CD4-positive, alpha-beta memory T cell (primary cell): ENCODE measurements at regions of chr14 and their contacts with region 1.

Region 1: DNA sequence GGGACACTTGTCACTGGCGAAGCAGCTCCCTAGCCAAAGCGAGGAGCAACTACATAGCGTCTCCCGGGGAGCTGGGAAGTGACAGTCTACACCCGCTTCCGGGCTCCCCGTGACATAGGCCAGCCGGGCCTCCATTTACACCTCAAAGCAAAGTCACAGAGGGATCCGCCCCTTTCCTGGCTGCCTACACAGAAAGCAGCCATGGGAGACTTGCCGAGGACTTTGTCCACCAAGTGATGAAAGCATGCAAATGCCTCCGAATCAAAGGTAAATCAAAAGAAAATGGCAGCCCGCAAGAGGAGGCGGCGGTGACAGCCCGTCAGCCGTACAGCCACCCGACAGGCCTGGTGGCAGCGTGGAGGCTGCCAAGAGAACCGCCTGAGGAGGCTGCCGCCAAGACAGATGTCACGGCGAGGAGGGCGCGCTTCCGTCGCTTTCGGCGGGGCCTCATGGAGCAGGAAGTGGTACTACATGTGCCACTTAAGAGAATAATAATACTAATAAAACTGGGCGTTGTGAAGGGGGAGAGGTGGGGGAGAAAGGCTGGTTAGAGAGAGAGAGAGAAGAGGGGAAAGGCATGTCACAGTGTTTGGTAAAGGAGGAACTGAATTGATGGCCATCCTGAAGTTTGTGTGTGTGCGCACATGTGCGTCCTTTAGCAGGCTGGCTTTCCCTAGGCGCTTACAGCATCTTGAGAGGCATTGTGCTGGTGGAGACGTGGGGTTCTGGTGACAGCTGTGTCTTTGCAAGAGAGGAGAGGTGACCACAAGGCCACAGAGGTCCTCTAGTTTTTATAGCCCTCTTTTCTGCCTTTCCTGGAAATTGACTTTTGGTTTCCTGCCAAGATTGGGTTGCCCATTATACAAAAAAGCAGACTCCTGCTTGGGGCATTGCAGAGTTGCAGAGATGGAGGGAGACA is 661.7 kb downstream of the VRK1 start:
- DNase-seq: peak; percentile 82 to 91 (median 85)
- H3K4me3 ChIP-seq: peak overlapping the region; percentile 50 to 69
- H3K4me3 Mint-ChIP-seq: peak overlapping the region; percentile 89 to 97 (median 94)
- H3K27ac ChIP-seq: peak overlapping the region; percentile 70
- H3K27ac Mint-ChIP-seq: peak overlapping the region; percentile 91 to 99 (median 97)
- H3K4me1 ChIP-seq: peaks cover 45% of the 10 kb centered on the region
- H3K4me1 Mint-ChIP-seq: peaks cover 28 to 69% (median 50%) of the 10 kb centered on the region in 4 donors
- H3K27me3 ChIP-seq: no peaks in the 10 kb centered on the region
- H3K27me3 Mint-ChIP-seq: no peaks in the 10 kb centered on the region

Region 2: DNA sequence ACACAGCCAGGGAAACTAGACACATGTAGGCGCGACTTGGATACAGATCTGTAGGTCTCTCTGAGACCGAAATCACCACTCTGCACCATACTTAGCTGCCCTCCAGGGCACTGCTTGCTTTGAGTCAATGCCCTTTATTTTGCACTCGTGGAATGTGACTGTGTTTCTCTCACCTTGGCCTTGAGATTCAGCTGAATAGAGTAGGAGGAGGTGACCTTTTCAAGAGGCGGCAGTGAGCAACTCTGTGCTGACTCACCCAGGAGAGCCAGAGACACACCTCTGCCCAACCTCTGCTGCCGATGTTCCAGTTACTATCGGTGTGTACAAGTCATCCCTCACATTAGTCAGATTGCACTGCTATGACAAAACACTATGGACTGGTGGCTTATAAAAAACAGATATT is 78.4 kb before region 1 on chr14:
- CTCF ChIA-PET with region 1: interaction called, 5 read pairs
- POLR2A ChIA-PET with region 1: interaction called, 26 read pairs
- intact Hi-C with region 1: no loop called
- DNase-seq: peak in 1 of 5 donors; percentile 54
- H3K4me3 ChIP-seq: no peak overlapping the region
- H3K4me3 Mint-ChIP-seq: peak overlapping the region in 7 of 8 donors; percentile 28 to 89 (median 76)
- H3K27ac ChIP-seq: no peak overlapping the region
- H3K27ac Mint-ChIP-seq: peak overlapping the region in 6 of 7 donors; percentile 9 to 91 (median 66)
- H3K4me1 ChIP-seq: peaks cover 44% of the 10 kb centered on the region
- H3K4me1 Mint-ChIP-seq: peaks cover 41 to 66% (median 53%) of the 10 kb centered on the region in 4 donors
- H3K27me3 ChIP-seq: no peaks in the 10 kb centered on the region
- H3K27me3 Mint-ChIP-seq: no peaks in the 10 kb centered on the region

Region 3: GRCh38 chr14:97410667-97411620 is 48.0 kb before region 1 on chr14:
- CTCF ChIA-PET with region 1: no interaction called
- POLR2A ChIA-PET with region 1: interaction called, 5 read pairs
- intact Hi-C with region 1: loop called (anchors 5 kb)
- DNase-seq: no peak
- H3K4me3 ChIP-seq: no peak overlapping the region
- H3K4me3 Mint-ChIP-seq: no peak overlapping the region
- H3K27ac ChIP-seq: no peak overlapping the region
- H3K27ac Mint-ChIP-seq: no peak overlapping the region
- H3K4me1 ChIP-seq: peaks cover 40% of the 10 kb centered on the region
- H3K4me1 Mint-ChIP-seq: peaks cover 24 to 30% (median 26%) of the 10 kb centered on the region in 4 donors
- H3K27me3 ChIP-seq: no peaks in the 10 kb centered on the region
- H3K27me3 Mint-ChIP-seq: peaks cover 0 to 1% of the 10 kb centered on the region in 2 donors

Region 4: DNA sequence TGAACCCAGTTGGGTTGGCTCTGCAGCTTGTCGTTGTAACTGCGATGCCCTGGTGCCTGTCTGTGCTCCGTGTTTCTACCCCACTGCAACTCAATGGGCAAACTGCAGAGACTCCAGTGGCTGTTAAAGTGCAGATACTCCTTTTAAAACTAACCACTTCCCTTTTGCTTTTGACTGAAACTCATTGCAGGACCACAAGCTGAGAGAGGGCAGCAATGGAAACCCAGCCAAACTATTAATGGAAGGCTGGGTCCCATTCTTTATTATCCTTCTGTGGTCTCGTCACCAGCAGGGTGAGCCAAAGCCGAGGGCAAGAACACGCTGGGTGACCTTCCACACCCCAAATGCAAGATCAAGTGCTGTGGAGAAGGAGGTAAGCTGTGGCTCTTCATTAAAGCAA is 248.7 kb after region 1 on chr14:
- CTCF ChIA-PET with region 1: no interaction called
- POLR2A ChIA-PET with region 1: interaction called, 3 read pairs
- intact Hi-C with region 1: loop called (anchors 10 kb)
- DNase-seq: peak; percentile 24 to 36 (median 28)
- H3K4me3 ChIP-seq: no peak overlapping the region
- H3K4me3 Mint-ChIP-seq: peak overlapping the region in 7 of 8 donors; percentile 25 to 88 (median 68)
- H3K27ac ChIP-seq: no peak overlapping the region
- H3K27ac Mint-ChIP-seq: peak overlapping the region; percentile 5 to 85 (median 74)
- H3K4me1 ChIP-seq: peaks cover 84% of the 10 kb centered on the region
- H3K4me1 Mint-ChIP-seq: peaks cover 79 to 100% (median 90%) of the 10 kb centered on the region in 4 donors
- H3K27me3 ChIP-seq: no peaks in the 10 kb centered on the region
- H3K27me3 Mint-ChIP-seq: no peaks in the 10 kb centered on the region

Region 5: GRCh38 chr14:98252820-98253219 is 793.9 kb after region 1 on chr14:
- CTCF ChIA-PET with region 1: no interaction called
- POLR2A ChIA-PET with region 1: no interaction called
- intact Hi-C with region 1: no loop called
- DNase-seq: no peak
- H3K4me3 ChIP-seq: no peak overlapping the region
- H3K4me3 Mint-ChIP-seq: no peak overlapping the region
- H3K27ac ChIP-seq: no peak overlapping the region
- H3K27ac Mint-ChIP-seq: peak overlapping the region in 2 of 7 donors; percentile 0 to 26
- H3K4me1 ChIP-seq: no peaks in the 10 kb centered on the region
- H3K4me1 Mint-ChIP-seq: peaks cover 0 to 15% (median 8%) of the 10 kb centered on the region in 4 donors
- H3K27me3 ChIP-seq: no peaks in the 10 kb centered on the region
- H3K27me3 Mint-ChIP-seq: no peaks in the 10 kb centered on the region